Endothelial cell of umbilical vein (primary cell): ENCODE measurements at regions of chr11 and their contacts with region 1.

Region 1: DNA sequence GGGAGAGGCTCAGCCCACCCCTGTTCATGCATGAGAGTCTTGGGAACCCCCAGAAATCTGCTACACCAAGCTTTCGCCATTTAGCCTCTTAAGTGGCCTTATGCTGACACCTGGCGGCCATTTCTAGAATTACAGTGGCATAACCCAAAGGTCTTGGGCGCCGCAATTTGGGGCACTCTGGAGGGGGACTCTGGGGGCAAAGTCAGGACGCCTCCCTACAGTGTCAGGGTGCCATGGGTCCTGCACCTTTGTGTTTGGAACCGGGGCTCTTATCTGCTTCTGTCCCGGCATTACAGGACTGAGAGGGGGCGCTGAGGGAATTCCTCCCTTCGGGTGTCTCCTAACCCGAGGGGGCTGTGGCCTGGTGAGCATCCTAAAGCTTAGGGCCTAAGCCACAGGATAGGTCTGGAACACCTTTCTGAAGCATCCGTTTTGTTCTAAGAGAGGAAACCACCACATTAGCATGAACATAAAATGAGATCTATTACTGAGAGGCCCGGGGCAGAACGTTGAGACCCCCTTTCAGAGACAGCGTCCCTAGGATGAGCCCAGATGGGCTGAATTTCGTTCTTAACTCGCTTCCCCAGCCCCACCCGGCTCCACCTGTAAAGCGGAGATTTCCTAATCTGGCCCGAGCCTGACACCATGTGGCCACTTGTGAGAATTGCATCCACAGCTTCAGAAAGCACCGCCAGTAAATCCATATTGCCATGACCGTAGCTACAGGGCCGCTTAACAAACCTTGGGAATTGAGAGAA is 9.3 kb downstream of the INS start:
- DNase-seq: peak; percentile 74
- H3K4me3 ChIP-seq: no peak overlapping the region
- H3K27ac ChIP-seq: no peak overlapping the region
- H3K4me1 ChIP-seq: no peaks in the 10 kb centered on the region
- H3K27me3 ChIP-seq: peaks cover 13 to 16% of the 10 kb centered on the region in 2 experiments
- CTCF ChIP-seq: peak; percentile 59 to 73
- POLR2A ChIP-seq: no peak

Region 2: DNA sequence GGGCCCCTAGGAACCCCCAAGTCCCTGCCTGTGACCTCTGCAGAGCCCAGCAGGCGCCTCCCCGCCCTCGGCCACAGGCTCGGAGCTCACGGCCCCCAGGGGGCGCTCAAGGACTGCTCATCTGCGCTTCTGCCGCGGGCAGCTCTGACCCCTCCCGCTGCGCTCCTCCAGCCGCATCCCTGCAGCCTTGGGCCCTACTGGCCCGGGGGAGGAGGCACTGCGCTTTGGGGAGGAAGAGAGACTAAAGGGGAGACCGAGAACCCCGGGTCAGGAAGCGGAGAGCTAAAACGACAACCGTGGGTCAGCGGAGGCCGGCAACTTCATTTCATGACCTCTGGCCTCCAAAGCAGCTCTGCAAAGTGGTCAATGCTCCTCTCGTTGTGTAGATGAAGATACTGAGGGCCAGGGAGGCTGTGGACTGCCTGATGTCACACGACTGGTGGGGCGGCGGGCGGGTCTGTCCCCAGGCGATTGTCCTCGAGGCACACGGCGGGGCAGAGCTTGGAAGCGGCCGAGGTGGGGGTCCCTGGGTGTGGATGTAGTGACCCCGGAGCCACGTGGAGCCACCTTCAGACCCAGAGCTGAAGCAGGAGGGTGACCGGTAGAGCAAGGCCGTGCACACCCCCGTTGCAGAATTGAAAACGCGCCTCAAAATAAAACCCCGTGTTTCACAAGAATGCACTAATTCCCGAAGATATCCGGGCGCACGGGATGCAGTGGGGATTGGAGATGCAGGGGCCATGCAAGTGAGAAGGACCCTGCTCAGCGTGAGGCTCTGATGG is 457.4 kb before region 1 on chr11:
- CTCF ChIA-PET with region 1: interaction called, 167 read pairs
- POLR2A ChIA-PET with region 1: no interaction called
- dilution Hi-C with region 1: no loop called
- intact Hi-C with region 1: loop called (anchors 1 kb)
- DNase-seq: peak; percentile 56
- H3K4me3 ChIP-seq: no peak overlapping the region
- H3K27ac ChIP-seq: no peak overlapping the region
- H3K4me1 ChIP-seq: peaks cover 16% of the 10 kb centered on the region
- H3K27me3 ChIP-seq: no peaks in the 10 kb centered on the region
- CTCF ChIP-seq: peak; percentile 94 to 98
- POLR2A ChIP-seq: no peak

Region 3: GRCh38 chr11:1876361-1877063 is 275.2 kb before region 1 on chr11:
- CTCF ChIA-PET with region 1: interaction called, 262 read pairs
- POLR2A ChIA-PET with region 1: no interaction called
- dilution Hi-C with region 1: no loop called
- intact Hi-C with region 1: loop called (anchors 1 kb)
- DNase-seq: no peak
- H3K4me3 ChIP-seq: no peak overlapping the region
- H3K27ac ChIP-seq: no peak overlapping the region
- H3K4me1 ChIP-seq: no peaks in the 10 kb centered on the region
- H3K27me3 ChIP-seq: no peaks in the 10 kb centered on the region
- CTCF ChIP-seq: peak; percentile 61 to 76
- POLR2A ChIP-seq: no peak

Region 4: GRCh38 chr11:1953489-1954266 is 198.0 kb before region 1 on chr11:
- CTCF ChIA-PET with region 1: interaction called, 53 read pairs
- POLR2A ChIA-PET with region 1: no interaction called
- dilution Hi-C with region 1: no loop called
- intact Hi-C with region 1: no loop called
- DNase-seq: no peak
- H3K4me3 ChIP-seq: no peak overlapping the region
- H3K27ac ChIP-seq: no peak overlapping the region
- H3K4me1 ChIP-seq: no peaks in the 10 kb centered on the region
- H3K27me3 ChIP-seq: no peaks in the 10 kb centered on the region
- CTCF ChIP-seq: no peak
- POLR2A ChIP-seq: no peak

Region 5: GRCh38 chr11:2027708-2028107 is 124.0 kb before region 1 on chr11:
- CTCF ChIA-PET with region 1: interaction called, 868 read pairs
- POLR2A ChIA-PET with region 1: no interaction called
- dilution Hi-C with region 1: no loop called
- intact Hi-C with region 1: no loop called
- DNase-seq: no peak
- H3K4me3 ChIP-seq: no peak overlapping the region
- H3K27ac ChIP-seq: no peak overlapping the region
- H3K4me1 ChIP-seq: no peaks in the 10 kb centered on the region
- H3K27me3 ChIP-seq: no peaks in the 10 kb centered on the region
- CTCF ChIP-seq: no peak
- POLR2A ChIP-seq: no peak

Region 6: GRCh38 chr11:2099516-2100340 is 52.0 kb before region 1 on chr11:
- CTCF ChIA-PET with region 1: interaction called, 21 read pairs
- POLR2A ChIA-PET with region 1: no interaction called
- dilution Hi-C with region 1: no loop called
- intact Hi-C with region 1: no loop called
- DNase-seq: peak; percentile 36
- H3K4me3 ChIP-seq: no peak overlapping the region
- H3K27ac ChIP-seq: peak overlapping the region; percentile 90
- H3K4me1 ChIP-seq: peaks cover 35% of the 10 kb centered on the region
- H3K27me3 ChIP-seq: no peaks in the 10 kb centered on the region
- CTCF ChIP-seq: peak in 1 of 2 donors; percentile 8
- POLR2A ChIP-seq: no peak